ENCODE measurements at regions of chr15 and their contacts with region 1.

Region 1: GRCh38 chr15:34969340-34970097 is at the start of gene AQR:
- DNase-seq: peak; percentile 96
- ATAC-seq: peak; percentile 99
- H3K4me3 ChIP-seq: peak within 1 kb of the TSS; percentile 97 to 100
- H3K27ac ChIP-seq: peak within 1 kb of the TSS; percentile 65
- H3K4me1 ChIP-seq: peaks cover 7 to 14% of the 10 kb centered on the region in 2 experiments; a peak in 2 of 4 replicates
- H3K27me3 ChIP-seq: no peaks in the 10 kb centered on the region
- CTCF ChIP-seq: peak; percentile 41 to 95 (median 90); a peak in 5 of 6 replicates
- POLR2A ChIP-seq: peak; percentile 53
- RAD21 ChIP-seq: no peak; the same call in none of the 2 replicates
- total RNA-seq, gene AQR: 30.7 TPM

Region 2: DNA sequence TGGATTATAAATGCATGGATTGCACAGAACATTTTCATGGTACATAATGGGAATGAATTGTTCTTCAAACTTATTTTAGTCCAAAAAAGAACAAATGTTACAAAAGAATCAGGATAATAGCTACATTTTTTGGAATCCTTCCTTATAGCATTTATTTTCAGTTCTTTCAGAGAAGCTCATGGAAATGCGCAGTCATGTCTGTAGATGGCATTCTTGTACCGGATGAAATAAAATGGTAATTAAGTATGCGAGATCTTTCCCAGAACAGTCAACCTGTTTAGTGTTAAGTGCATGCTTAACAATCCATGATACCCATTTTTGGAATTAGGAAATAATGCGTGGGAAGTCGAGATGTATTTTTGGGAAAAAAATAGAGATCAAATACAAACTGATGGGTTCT is 347.8 kb before region 1 on chr15:
- CTCF ChIA-PET with region 1: interaction called, 13 read pairs
- POLR2A ChIA-PET with region 1: interaction called, 4 read pairs
- RAD21 ChIA-PET with region 1: no interaction called
- intact Hi-C with region 1: no loop called
- DNase-seq: peak; percentile 13
- ATAC-seq: peak; percentile 58
- H3K4me3 ChIP-seq: no peak overlapping the region
- H3K27ac ChIP-seq: no peak overlapping the region
- H3K4me1 ChIP-seq: 0 out of 4 replicates have a peak, but pooled peaks cover 0 to 1% of the 10 kb centered on the region in 2 experiments
- H3K27me3 ChIP-seq: peaks cover 30% of the 10 kb centered on the region; the same call in 1 of the 2 replicates
- CTCF ChIP-seq: peak; percentile 17 to 63 (median 32); a peak in 4 of 6 replicates
- POLR2A ChIP-seq: no peak
- RAD21 ChIP-seq: peak; percentile 60

Region 3: DNA sequence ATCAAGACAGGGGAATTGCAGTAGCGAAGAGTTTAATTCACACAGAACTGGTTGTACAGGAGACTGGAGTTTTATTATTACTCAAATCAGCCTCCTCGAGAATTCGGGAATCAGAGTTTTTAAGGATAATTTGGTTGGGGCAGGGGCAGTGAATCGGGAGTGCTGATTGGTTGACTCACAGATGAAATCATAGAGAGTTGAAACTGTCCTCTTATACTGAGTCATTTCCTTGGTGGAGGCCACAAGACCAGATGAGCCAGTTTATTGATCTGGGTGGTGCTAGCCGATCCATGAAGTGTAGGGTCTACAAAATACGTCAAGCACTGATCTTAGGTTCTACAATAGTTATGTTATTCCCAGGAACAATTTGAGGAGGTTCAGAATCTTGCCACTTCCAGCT is 23.9 kb after region 1 on chr15:
- CTCF ChIA-PET with region 1: interaction called, 28 read pairs
- POLR2A ChIA-PET with region 1: interaction called, 19 read pairs
- RAD21 ChIA-PET with region 1: interaction called in 1 of 2 experiments, 3 read pairs
- intact Hi-C with region 1: loop called (anchors 1 kb)
- DNase-seq: peak; percentile 63
- ATAC-seq: peak; percentile 60
- H3K4me3 ChIP-seq: peak overlapping the region in 1 of 2 experiments; percentile 25; a peak in 1 of 4 replicates
- H3K27ac ChIP-seq: peak overlapping the region; percentile 33; the same call in 1 of the 2 replicates
- H3K4me1 ChIP-seq: peaks cover 22 to 50% of the 10 kb centered on the region in 2 experiments
- H3K27me3 ChIP-seq: no peaks in the 10 kb centered on the region
- CTCF ChIP-seq: no peak
- POLR2A ChIP-seq: no peak
- RAD21 ChIP-seq: no peak

Measured in HCT116 (cell line).